ENCODE measurements at regions of chr2 and their contacts with region 1.

Region 1: GRCh38 chr2:215793747-215794595 is 219.4 kb downstream of the MREG start:
- DNase-seq: peak; percentile 100
- ATAC-seq: peak; percentile 86
- H3K4me3 ChIP-seq: peak overlapping the region in 1 of 3 experiments; percentile 1; a peak in 1 of 6 replicates
- H3K27ac ChIP-seq: peak overlapping the region; percentile 85
- H3K4me1 ChIP-seq: peaks cover 77% of the 10 kb centered on the region
- H3K27me3 ChIP-seq: no peaks in the 10 kb centered on the region
- CTCF ChIP-seq: no peak
- EP300 ChIP-seq: peak; percentile 64 to 99; a peak in 3 of 4 replicates
- POLR2A ChIP-seq: 0 out of 4 replicates have a peak, but pooled peaks of 1 of the 2 experiments have one; percentile 25
- RAD21 ChIP-seq: no peak

Region 2: GRCh38 chr2:215435809-215436704 is 357.9 kb before region 1 on chr2 and contains the start of gene FN1:
- CTCF ChIA-PET with region 1: no interaction called
- POLR2A ChIA-PET with region 1: interaction called, 11 read pairs
- in situ Hi-C with region 1: no loop called
- intact Hi-C with region 1: loop called (anchors 5 kb)
- DNase-seq: peak; percentile 91
- ATAC-seq: peak; percentile 92
- H3K4me3 ChIP-seq: peak within 1 kb of the TSS; percentile 86 to 99 (median 95)
- H3K27ac ChIP-seq: peak within 1 kb of the TSS; percentile 71
- H3K4me1 ChIP-seq: peaks cover 71% of the 10 kb centered on the region
- H3K27me3 ChIP-seq: no peaks in the 10 kb centered on the region; a peak in 1 of 5 replicates
- CTCF ChIP-seq: no peak
- EP300 ChIP-seq: peak in 1 of 2 experiments; percentile 27; a peak in 1 of 4 replicates
- POLR2A ChIP-seq: peak; percentile 97 to 99
- RAD21 ChIP-seq: no peak; the same call in 1 of the 2 replicates
- total RNA-seq, gene FN1: 1,029 and 1,847 TPM in 2 replicates

Region 3: GRCh38 chr2:215499330-215499729 is 294.6 kb before region 1 on chr2:
- CTCF ChIA-PET with region 1: no interaction called
- POLR2A ChIA-PET with region 1: no interaction called
- in situ Hi-C with region 1: no loop called
- intact Hi-C with region 1: no loop called
- DNase-seq: no peak
- ATAC-seq: no peak
- H3K4me3 ChIP-seq: no peak overlapping the region
- H3K27ac ChIP-seq: no peak overlapping the region
- H3K4me1 ChIP-seq: peaks cover 33% of the 10 kb centered on the region
- H3K27me3 ChIP-seq: no peaks in the 10 kb centered on the region
- CTCF ChIP-seq: no peak
- EP300 ChIP-seq: no peak
- POLR2A ChIP-seq: no peak
- RAD21 ChIP-seq: no peak

Region 4: GRCh38 chr2:215619022-215619958 is 174.7 kb before region 1 on chr2:
- CTCF ChIA-PET with region 1: no interaction called
- POLR2A ChIA-PET with region 1: interaction called, 17 read pairs
- in situ Hi-C with region 1: no loop called
- intact Hi-C with region 1: loop called (anchors 1 kb)
- DNase-seq: peak; percentile 100
- ATAC-seq: peak; percentile 89
- H3K4me3 ChIP-seq: peak overlapping the region in 1 of 3 experiments; percentile 4; a peak in 1 of 6 replicates
- H3K27ac ChIP-seq: peak overlapping the region; percentile 90
- H3K4me1 ChIP-seq: peaks cover 91% of the 10 kb centered on the region
- H3K27me3 ChIP-seq: no peaks in the 10 kb centered on the region
- CTCF ChIP-seq: no peak
- EP300 ChIP-seq: peak; percentile 89 to 99
- POLR2A ChIP-seq: peak; percentile 19 to 61; a peak in 3 of 4 replicates
- RAD21 ChIP-seq: peak; percentile 24; the same call in 1 of the 2 replicates

Region 5: DNA sequence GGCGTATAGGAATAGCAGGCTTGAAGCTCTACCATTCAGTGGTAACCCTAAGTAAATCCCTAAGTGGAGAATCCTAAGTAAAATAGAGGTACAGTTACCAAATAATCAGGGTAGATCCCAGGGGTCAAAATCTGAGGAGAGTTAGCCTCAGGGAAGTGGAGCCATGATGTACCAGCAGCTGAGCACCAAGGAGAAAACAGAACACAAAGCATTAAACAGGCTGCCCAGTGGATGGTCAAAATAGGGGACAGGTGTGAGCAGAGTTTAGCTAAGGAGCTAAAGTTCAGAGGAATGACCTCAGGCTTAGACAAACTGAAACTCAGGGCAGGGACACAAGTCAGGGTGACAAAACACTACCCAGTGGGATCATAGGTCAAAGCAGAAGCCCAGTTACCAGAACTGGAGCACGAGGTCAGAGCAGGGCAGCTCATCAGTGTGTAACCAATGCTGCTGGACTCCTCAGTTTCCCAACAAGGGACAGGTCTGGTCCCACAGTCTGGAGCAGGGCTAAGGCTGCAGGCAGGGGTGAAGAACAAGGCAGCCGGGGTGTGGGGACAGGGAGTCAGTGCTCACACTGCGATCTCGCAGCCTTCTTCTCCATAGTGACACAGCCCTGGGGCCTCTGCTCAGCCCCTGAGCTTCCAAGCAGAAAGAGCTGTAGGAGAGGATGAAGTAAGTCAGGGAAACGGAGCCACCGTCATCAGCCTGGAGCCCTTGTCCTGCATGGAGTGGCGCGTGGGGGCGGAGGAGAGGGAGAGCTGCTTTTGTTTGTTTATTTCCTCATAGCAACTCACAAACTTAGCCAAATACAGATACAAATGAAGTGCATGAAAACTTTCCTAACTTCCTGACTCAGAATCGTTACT is 44.6 kb before region 1 on chr2:
- CTCF ChIA-PET with region 1: no interaction called
- POLR2A ChIA-PET with region 1: interaction called, 66 read pairs
- in situ Hi-C with region 1: no loop called
- intact Hi-C with region 1: loop called (anchors 2 kb)
- DNase-seq: peak; percentile 91
- ATAC-seq: peak; percentile 92
- H3K4me3 ChIP-seq: no peak overlapping the region
- H3K27ac ChIP-seq: peak overlapping the region; percentile 79
- H3K4me1 ChIP-seq: peaks cover 86% of the 10 kb centered on the region
- H3K27me3 ChIP-seq: no peaks in the 10 kb centered on the region
- CTCF ChIP-seq: peak; percentile 25; the same call in 1 of the 2 replicates
- EP300 ChIP-seq: peak in 1 of 2 experiments; percentile 97; a peak in 2 of 4 replicates
- POLR2A ChIP-seq: peak; percentile 26 to 49; a peak in 2 of 4 replicates
- RAD21 ChIP-seq: 0 out of 2 replicates have a peak, but pooled peaks have one; percentile 37

Region 6: DNA sequence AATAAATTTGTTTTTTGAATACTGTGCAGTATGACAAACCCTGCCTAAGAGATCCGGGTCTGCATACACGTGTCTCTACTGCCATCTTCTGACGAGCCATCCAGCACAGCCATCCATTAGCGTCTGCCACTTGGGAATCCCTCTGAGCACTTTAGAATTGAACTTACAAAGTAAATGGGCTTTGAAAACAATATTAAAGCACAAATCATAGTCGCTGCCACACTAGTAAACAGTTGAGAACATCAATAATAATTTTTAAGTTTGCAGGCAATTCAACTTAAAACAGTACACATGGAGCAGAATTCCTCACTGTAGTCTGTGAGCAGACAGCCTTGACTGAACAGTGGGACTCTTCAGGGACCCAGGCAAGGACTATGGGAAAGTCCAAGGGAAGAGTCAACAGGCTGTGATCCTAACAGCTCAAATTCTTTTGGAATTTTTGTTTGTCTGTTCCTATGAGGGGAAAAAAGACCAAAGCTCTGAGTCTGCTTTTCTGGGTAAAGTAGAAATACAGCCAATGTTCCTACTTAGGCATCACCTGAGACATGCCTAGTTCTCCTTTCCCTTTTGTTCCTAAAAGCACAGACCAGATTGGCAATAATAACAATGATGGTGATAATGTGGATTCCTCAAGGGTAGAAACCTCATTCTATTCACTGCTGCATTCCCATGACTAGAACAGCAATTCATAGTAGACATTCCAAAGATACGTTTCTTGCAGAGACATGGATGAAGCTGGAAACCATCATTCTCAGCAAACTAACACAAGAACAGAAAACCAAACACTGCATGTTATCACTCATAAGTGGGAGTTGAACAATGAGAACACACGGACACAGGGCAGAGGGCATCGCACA is 126.5 kb after region 1 on chr2:
- CTCF ChIA-PET with region 1: interaction called, 16 read pairs
- POLR2A ChIA-PET with region 1: interaction called, 3 read pairs
- in situ Hi-C with region 1: loop called (anchors 5 kb)
- intact Hi-C with region 1: loop called (anchors 1 kb)
- DNase-seq: peak; percentile 81
- ATAC-seq: peak; percentile 98
- H3K4me3 ChIP-seq: no peak overlapping the region
- H3K27ac ChIP-seq: peak overlapping the region; percentile 16
- H3K4me1 ChIP-seq: peaks cover 42% of the 10 kb centered on the region
- H3K27me3 ChIP-seq: no peaks in the 10 kb centered on the region
- CTCF ChIP-seq: peak; percentile 96
- EP300 ChIP-seq: peak in 1 of 2 experiments; percentile 43; a peak in 2 of 4 replicates
- POLR2A ChIP-seq: no peak
- RAD21 ChIP-seq: peak; percentile 96